K562 (cell line): ENCODE measurements at regions of chr1 and their contacts with region 1.

Region 1: DNA sequence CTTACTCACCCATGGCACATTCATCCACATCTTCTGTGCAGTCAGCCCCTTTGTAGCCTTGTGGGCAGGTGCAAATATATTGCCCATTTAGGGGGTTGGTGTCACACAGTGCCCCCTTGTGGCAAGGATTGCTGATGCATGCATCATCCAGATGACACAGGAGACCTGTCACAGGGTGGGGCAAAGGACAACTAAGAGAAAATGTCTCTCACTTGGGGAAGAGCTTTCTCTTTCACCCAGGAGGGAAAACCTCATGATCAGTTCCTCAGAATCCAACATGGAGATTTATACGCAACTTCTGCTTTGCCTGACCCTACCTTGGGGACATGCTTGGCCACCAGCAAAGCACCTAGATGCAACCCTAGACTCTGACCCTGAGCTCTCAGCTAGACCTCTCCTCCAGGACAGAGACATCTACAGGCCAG is 71.8 kb upstream of the ADAM30 start:
- DNase-seq: peak; percentile 61 to 83 (median 72)
- ATAC-seq: peak; percentile 99
- H3K4me3 ChIP-seq: no peak overlapping the region
- H3K27ac ChIP-seq: no peak overlapping the region
- H3K4me1 ChIP-seq: no peaks in the 10 kb centered on the region
- H3K27me3 ChIP-seq: peaks cover 0 to 5% of the 10 kb centered on the region in 2 experiments; a peak in 1 of 5 replicates
- CTCF ChIP-seq: peak; percentile 85 to 95 (median 92)
- EP300 ChIP-seq: no peak
- POLR2A ChIP-seq: no peak
- RAD21 ChIP-seq: peak; percentile 73 to 91

Region 2: DNA sequence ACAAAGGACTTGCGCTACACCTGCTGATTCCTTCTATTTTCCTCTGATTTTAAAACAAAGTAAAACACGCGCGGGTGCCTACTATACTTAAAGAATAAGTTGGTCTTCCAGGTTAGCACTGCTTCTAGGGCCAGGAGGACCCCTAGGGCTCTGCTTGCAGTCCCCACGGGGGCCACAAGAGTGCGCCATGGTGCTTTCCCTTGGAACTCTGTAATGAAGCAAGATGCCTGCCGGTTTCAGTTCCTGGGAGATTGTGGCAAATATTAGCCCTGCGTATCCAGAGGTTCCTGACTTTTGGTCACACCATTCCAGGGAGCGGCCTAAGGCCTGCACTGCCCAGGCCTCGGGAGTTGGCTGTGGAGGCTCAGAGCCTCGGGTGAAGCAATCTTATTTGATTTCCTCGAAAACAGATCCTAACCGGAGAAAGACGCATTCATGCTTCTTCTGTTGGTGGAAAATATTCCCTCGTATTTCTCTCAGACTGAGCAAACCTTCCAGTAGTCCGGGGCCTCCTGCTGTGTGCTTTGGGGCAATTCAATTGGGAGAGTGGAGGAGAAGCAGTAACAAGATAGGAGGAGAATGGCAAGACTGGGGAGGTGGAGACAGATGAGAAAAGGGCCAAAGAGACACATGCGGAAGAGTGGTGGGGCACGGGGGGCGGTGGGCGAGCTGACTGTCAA is 97.0 kb before region 1 on chr1:
- CTCF ChIA-PET with region 1: interaction called, 13 read pairs
- POLR2A ChIA-PET with region 1: no interaction called
- in situ Hi-C with region 1: no loop called
- intact Hi-C with region 1: loop called (anchors 1 kb)
- DNase-seq: peak; percentile 85 to 86 (median 85)
- ATAC-seq: peak; percentile 96
- H3K4me3 ChIP-seq: no peak overlapping the region
- H3K27ac ChIP-seq: no peak overlapping the region
- H3K4me1 ChIP-seq: peaks cover 4 to 22% of the 10 kb centered on the region in 2 experiments; a peak in 3 of 5 replicates
- H3K27me3 ChIP-seq: no peaks in the 10 kb centered on the region
- CTCF ChIP-seq: peak; percentile 96 to 99 (median 98)
- EP300 ChIP-seq: no peak; the same call in 1 of the 2 replicates
- POLR2A ChIP-seq: no peak
- RAD21 ChIP-seq: peak; percentile 93 to 97

Region 3: DNA sequence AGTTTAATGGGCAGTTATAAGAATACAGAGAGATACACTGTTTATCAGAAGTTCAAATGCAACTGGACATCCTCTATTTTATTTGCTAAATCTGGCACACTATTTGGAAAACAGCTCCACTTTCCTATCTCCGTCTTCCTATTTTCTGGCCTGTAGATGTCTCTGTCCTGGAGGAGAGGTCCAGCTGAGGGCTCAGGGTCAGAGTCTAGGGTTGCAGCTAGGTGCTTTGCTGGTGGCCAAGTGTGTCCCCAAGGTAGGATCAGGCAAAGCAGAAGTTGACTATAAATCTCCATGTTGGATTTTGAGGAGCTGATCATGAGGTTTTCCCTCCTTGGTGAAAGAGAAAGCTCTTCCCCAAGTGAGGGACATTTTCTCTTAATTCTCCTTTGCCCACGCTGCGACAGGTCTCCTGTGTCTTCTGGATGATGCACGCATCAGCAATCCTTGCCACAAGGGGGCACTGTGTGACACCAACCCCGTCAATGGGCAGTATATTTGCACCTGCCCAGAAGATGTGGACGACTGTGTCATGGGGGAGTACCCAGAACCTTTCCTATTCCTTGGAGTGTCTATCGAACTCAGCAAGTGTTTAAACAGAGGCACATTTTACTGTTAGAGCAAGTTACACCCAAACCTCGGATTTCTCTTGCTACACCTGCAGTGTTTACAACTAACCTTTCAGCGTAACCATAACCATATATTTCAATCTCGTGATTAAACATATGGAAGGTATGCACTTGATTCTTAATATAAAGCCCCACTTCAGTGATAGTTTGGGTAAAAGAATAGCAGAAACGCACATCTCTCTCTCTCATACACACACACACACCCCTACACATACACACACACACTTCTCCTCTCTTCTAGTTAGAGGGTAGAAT is 81.9 kb before region 1 on chr1:
- CTCF ChIA-PET with region 1: no interaction called
- POLR2A ChIA-PET with region 1: no interaction called
- in situ Hi-C with region 1: no loop called
- intact Hi-C with region 1: loop called (anchors 5 kb)
- DNase-seq: peak; percentile 64 to 74 (median 72)
- ATAC-seq: peak; percentile 98
- H3K4me3 ChIP-seq: no peak overlapping the region
- H3K27ac ChIP-seq: no peak overlapping the region
- H3K4me1 ChIP-seq: peaks cover 0 to 4% of the 10 kb centered on the region in 2 experiments; a peak in 2 of 5 replicates
- H3K27me3 ChIP-seq: no peaks in the 10 kb centered on the region; a peak in 1 of 5 replicates
- CTCF ChIP-seq: peak; percentile 75 to 87 (median 78)
- EP300 ChIP-seq: no peak
- POLR2A ChIP-seq: no peak
- RAD21 ChIP-seq: peak; percentile 19 to 69; a peak in 2 of 4 replicates

Region 4: GRCh38 chr1:119948342-119949214 is 19.5 kb before region 1 on chr1:
- CTCF ChIA-PET with region 1: interaction called, 6 read pairs
- POLR2A ChIA-PET with region 1: no interaction called
- in situ Hi-C with region 1: no loop called
- intact Hi-C with region 1: loop called (anchors 1 kb)
- DNase-seq: peak; percentile 51 to 81 (median 58)
- ATAC-seq: peak; percentile 99
- H3K4me3 ChIP-seq: no peak overlapping the region
- H3K27ac ChIP-seq: no peak overlapping the region
- H3K4me1 ChIP-seq: no peaks in the 10 kb centered on the region
- H3K27me3 ChIP-seq: no peaks in the 10 kb centered on the region
- CTCF ChIP-seq: peak; percentile 83 to 95 (median 94)
- EP300 ChIP-seq: no peak
- POLR2A ChIP-seq: no peak
- RAD21 ChIP-seq: peak; percentile 74 to 91

Region 5: GRCh38 chr1:119987112-119987511 is 19.0 kb after region 1 on chr1:
- CTCF ChIA-PET with region 1: no interaction called
- POLR2A ChIA-PET with region 1: no interaction called
- in situ Hi-C with region 1: no loop called
- intact Hi-C with region 1: no loop called
- DNase-seq: no peak
- ATAC-seq: no peak
- H3K4me3 ChIP-seq: no peak overlapping the region
- H3K27ac ChIP-seq: no peak overlapping the region
- H3K4me1 ChIP-seq: no peaks in the 10 kb centered on the region
- H3K27me3 ChIP-seq: peaks cover 0 to 4% of the 10 kb centered on the region in 2 experiments; a peak in 2 of 5 replicates
- CTCF ChIP-seq: no peak
- EP300 ChIP-seq: no peak
- POLR2A ChIP-seq: no peak
- RAD21 ChIP-seq: no peak

Region 6: GRCh38 chr1:120133228-120133925 is 165.3 kb after region 1 on chr1:
- CTCF ChIA-PET with region 1: no interaction called
- POLR2A ChIA-PET with region 1: no interaction called
- in situ Hi-C with region 1: loop called (anchors 25 kb)
- intact Hi-C with region 1: no loop called
- DNase-seq: no peak
- ATAC-seq: no peak
- H3K4me3 ChIP-seq: no peak overlapping the region
- H3K27ac ChIP-seq: no peak overlapping the region
- H3K4me1 ChIP-seq: no peaks in the 10 kb centered on the region
- H3K27me3 ChIP-seq: no peaks in the 10 kb centered on the region
- CTCF ChIP-seq: no peak
- EP300 ChIP-seq: no peak
- POLR2A ChIP-seq: no peak
- RAD21 ChIP-seq: no peak